HEK293 (cell line): ENCODE measurements at regions of chr13 and their contacts with region 1.

Region 1: DNA sequence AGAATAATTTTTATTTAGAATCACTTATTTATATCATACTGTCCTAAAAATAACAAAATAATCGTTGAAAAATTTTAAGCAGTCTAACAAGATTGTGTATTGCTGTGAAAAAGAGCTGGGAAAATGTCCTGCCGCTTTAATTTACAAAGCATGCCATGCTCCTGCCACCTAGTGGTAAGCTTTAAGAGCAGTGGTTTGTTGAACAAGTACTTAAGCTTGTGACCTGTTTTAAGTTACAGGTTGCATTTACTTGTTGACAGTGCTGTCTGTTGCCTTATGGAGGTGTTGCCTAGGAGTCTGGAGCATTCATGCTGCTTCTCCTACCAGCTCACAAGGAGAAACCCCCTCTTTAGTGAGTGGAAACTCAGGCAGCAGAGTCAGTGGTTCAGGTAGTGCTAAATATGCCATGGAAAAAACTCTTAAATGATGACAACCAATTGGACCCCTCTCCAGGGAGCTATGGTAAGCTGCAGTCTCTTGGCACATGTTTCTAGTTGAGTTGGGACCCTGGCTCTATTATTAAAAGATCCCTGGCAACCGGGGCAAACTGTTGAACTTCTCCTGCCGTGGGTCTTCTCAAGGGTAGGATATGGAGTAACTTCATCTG is 68.4 kb downstream of the SPATA13 start:
- H3K4me3 ChIP-seq: no peak overlapping the region
- H3K27ac ChIP-seq: no peak overlapping the region
- H3K4me1 ChIP-seq: peaks cover 6% of the 10 kb centered on the region
- CTCF ChIP-seq: no peak; the same call in 1 of the 2 replicates

Region 2: GRCh38 chr13:24020375-24020830 is 208.6 kb before region 1 on chr13:
- CTCF ChIA-PET with region 1: interaction called, 14 read pairs
- POLR2A ChIA-PET with region 1: no interaction called
- H3K4me3 ChIP-seq: no peak overlapping the region
- H3K27ac ChIP-seq: no peak overlapping the region
- H3K4me1 ChIP-seq: no peaks in the 10 kb centered on the region
- CTCF ChIP-seq: no peak

Region 3: DNA sequence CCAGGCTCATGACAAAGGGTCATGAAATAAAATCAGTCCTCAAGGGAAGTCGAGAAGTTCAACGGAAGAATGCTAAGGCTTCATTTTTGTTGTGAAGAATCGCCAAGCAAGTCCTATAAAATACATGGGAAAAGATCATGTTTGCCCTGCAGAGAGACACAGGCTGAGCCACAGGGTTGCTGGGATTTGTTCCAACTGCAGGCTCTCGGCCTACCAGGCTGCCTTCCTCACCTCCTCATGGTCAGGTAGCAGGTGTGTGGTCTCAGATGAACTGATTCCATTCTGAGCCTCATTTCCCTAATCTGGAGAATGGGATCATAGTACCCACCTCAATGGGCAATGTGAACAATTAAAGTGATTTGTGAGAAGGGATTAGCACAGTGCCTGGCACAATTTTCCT is 183.4 kb before region 1 on chr13:
- CTCF ChIA-PET with region 1: no interaction called
- POLR2A ChIA-PET with region 1: no interaction called
- H3K4me3 ChIP-seq: no peak overlapping the region
- H3K27ac ChIP-seq: no peak overlapping the region
- H3K4me1 ChIP-seq: no peaks in the 10 kb centered on the region
- CTCF ChIP-seq: no peak

Region 4: GRCh38 chr13:24396821-24397220 is 167.9 kb after region 1 on chr13:
- CTCF ChIA-PET with region 1: no interaction called
- POLR2A ChIA-PET with region 1: no interaction called
- H3K4me3 ChIP-seq: no peak overlapping the region
- H3K27ac ChIP-seq: no peak overlapping the region
- H3K4me1 ChIP-seq: no peaks in the 10 kb centered on the region
- CTCF ChIP-seq: no peak